OCI-LY7 (cell line): ENCODE measurements at regions of chrX and their contacts with region 1.

Region 1: DNA sequence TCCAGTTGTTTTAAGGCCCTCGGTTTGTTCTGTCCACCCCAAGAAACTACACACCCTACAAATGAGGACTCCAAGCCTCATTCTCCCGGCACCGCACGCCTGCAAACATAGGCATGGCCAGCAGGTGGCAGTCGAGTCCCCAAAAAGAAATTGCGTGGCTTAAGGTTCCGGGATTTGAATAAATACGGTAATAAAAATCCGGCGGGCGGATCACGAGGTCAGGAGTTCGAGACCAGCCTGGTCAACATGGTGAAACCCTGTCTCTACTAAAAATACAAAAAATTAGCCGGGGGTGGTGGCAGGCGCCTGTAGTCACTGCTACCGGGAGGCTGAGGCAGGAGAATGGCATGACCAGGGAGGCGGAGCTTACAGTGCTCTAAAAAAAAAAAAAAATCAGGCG is 21.8 kb upstream of the CSF2RA start:
- DNase-seq: peak; percentile 85
- H3K4me3 ChIP-seq: no peak overlapping the region
- H3K27ac ChIP-seq: no peak overlapping the region
- H3K4me1 ChIP-seq: peaks cover 13% of the 10 kb centered on the region
- CTCF ChIP-seq: peak; percentile 88

Region 2: GRCh38 chrX:1205680-1206611 is 40.9 kb before region 1 on chrX:
- CTCF ChIA-PET with region 1: no interaction called
- POLR2A ChIA-PET with region 1: no interaction called
- intact Hi-C with region 1: loop called (anchors 1 kb)
- DNase-seq: peak; percentile 95
- H3K4me3 ChIP-seq: peak overlapping the region; percentile 72
- H3K27ac ChIP-seq: peak overlapping the region; percentile 63
- H3K4me1 ChIP-seq: peaks cover 24% of the 10 kb centered on the region
- CTCF ChIP-seq: no peak

Region 3: GRCh38 chrX:1323315-1323714 is 76.5 kb after region 1 on chrX:
- CTCF ChIA-PET with region 1: no interaction called
- POLR2A ChIA-PET with region 1: no interaction called
- intact Hi-C with region 1: loop called (anchors 1 kb)
- DNase-seq: peak; percentile 79
- H3K4me3 ChIP-seq: no peak overlapping the region
- H3K27ac ChIP-seq: no peak overlapping the region
- H3K4me1 ChIP-seq: peaks cover 8% of the 10 kb centered on the region
- CTCF ChIP-seq: peak; percentile 74